Left cardiac atrium (tissue), 4 donors: ENCODE measurements at regions of chr4 and their contacts with region 1.

Region 1: DNA sequence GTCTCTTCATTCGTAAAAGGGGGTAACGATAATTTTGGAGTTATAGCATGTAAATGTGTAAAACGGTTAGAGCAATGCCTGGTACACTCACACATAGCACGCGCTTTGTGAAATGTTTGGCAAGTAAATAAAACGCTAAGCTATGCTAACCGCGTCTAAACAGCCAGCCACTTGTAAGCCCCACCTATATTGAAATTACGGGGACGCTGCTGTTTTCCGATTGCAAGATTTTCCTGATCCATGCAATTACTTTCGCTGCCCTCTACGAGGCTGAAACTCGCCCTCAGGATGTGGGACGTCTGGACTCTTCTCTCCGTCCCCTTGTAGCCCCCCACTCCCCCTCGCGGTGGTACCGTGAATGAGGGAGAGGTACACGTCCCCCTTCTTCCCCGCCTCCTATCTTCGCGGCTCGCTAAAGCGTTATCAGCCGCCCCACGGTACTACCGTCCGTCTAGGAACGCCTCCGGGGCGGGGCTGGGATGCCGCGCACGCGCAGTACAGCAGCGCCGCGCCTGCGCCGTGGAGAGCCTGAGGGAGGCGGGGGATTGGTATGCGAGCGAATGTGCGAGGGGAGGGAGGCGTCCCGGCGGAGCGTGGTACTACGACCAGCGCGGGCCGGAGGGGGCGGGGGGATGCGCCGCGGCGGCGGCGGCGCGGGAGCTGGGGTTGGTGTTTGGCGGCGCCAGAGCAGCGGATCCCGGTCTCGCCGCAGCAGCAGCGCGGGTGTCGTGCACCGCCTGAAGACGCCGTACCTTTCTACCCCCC is at the start of gene STIM2:
- DNase-seq: peak; percentile 96
- ATAC-seq: peak; percentile 90 to 92
- total RNA-seq, gene STIM2: 12.1 to 16.9 TPM

Region 2: DNA sequence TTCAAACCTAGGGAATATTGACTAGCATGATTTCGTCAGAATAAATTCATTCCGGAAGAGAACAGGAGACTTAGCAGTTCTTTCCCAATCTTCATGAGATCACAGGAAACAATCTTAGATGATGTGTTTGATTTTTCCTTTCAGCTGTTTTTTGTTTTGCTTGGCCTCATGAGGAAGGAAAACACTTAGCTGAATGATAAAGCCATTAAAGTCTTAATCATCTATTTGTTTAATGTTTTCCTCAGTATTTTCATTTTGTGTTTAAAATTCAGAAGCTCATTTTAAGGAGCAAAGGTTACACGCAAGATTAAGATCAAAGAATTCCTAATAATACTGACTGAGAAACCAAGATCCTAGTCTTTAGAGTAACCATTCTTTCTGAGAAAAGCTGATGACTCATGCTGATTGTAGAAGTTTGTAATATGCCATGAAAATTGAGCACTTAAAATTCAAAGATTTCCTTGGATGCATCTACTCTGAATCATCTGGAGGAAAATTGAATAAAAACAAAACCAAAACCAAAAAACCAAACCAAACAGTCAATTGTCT is 291.8 kb before region 1 on chr4:
- intact Hi-C with region 1: no loop called
- DNase-seq: no peak
- ATAC-seq: peak in 1 of 2 donors; percentile 49

Region 3: DNA sequence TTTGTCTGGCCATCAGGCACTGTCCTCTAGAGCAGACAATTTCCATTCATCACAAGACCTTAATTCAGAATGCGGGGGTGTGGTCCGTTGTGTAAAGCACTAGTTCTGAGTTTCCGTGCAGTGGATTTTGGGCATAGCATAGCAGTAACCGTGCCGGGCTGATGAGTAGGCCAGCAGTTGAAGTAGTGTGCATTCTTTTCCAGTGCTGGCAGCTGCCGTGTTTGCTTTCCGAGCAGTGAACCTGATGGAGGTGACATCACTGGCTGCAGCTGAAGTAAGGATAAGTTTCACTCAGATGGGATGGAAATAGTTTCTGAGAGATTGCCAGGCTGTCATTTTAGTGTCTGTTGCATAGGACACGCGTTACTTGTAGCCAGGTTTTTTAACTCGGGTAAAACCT is 106.7 kb before region 1 on chr4:
- intact Hi-C with region 1: loop called in 1 of 2 experiments (anchors 10 kb)
- DNase-seq: peak; percentile 73
- ATAC-seq: peak; percentile 95 to 98

Region 4: DNA sequence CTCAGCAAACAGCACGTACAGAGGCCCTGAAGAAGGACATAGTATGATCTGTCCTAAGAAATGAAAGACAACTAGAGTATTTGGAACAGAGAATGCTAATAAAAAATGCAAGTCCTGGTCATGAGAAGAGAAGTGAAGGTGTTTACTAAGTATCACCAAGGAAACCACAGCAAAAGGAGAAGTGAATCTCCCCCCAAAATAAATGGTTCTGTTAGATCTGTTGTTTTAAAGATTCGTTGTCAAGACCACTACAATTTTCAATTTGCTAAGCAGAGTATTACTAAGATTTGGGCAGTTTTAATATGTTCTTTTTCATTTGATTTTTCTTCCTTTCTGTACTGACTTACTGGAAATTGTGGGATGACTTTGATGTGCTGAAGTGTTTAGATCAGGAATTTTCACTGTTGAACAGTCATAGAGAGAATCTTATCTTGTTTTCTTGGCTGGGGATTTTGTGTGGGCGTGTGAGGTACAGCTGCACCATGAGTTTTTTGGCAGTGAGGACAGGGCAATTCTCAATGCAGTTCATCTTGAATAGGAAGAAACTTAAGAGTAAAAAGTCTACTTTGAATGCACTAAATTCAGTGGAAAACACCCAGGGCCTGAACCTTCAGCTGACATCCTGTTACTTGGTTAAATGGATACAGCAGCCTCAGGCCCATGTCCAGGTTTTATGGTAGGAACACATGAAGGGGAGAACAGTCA is 132.5 kb after region 1 on chr4:
- intact Hi-C with region 1: loop called in 1 of 2 experiments (anchors 5 kb)
- DNase-seq: peak; percentile 39
- ATAC-seq: peak; percentile 92 to 98

Region 5: GRCh38 chr4:27000820-27001219 is 140.5 kb after region 1 on chr4:
- intact Hi-C with region 1: loop called (anchors 5 to 10 kb)
- DNase-seq: no peak
- ATAC-seq: no peak